ENCODE measurements at regions of chr6 and their contacts with region 1.

Region 1: DNA sequence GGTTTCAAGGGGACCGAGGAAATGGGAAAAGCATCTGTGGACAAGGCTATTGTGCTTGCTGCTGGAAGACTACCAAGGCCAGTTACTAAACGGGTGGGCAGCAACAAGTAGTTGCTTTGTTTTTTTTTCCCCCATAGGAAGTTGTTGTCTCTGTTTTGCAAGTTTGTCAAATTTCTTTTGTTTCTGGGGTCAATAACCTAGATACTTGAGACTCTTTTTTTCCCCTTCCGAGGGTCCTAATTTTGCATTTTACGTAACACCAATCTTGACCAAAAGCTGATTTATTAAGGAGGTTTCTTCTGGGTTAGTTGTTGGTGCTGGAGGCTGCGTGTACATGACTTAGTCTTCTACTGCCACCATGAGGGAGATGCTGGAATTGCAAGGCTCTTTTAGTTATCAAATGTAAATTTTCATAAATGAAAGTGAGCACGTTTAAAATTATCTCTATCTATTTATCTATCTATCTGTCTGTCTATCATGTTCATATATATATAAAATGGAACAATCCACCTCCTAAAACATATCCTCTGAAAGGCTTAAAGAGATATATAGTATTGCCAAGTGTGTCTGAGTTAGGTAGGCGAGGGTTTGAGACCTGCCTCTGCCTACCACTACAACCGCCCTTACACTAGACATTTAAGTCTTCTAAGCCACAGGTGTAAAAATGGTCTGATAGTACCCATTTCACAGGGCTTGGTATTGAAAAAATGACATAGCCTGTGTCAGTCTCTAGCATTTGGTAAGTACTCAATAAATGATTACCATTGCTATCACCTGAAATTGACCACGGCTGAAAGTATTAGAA is 60.2 kb downstream of the GCLC start:
- DNase-seq: no peak
- ATAC-seq: peak; percentile 66
- H3K4me3 Mint-ChIP-seq: peak overlapping the region; percentile 1
- H3K27ac Mint-ChIP-seq: peak overlapping the region; percentile 79
- H3K4me1 Mint-ChIP-seq: peaks cover 62% of the 10 kb centered on the region
- H3K27me3 Mint-ChIP-seq: peaks cover 3% of the 10 kb centered on the region
- CTCF ChIP-seq: peak; percentile 82

Region 2: DNA sequence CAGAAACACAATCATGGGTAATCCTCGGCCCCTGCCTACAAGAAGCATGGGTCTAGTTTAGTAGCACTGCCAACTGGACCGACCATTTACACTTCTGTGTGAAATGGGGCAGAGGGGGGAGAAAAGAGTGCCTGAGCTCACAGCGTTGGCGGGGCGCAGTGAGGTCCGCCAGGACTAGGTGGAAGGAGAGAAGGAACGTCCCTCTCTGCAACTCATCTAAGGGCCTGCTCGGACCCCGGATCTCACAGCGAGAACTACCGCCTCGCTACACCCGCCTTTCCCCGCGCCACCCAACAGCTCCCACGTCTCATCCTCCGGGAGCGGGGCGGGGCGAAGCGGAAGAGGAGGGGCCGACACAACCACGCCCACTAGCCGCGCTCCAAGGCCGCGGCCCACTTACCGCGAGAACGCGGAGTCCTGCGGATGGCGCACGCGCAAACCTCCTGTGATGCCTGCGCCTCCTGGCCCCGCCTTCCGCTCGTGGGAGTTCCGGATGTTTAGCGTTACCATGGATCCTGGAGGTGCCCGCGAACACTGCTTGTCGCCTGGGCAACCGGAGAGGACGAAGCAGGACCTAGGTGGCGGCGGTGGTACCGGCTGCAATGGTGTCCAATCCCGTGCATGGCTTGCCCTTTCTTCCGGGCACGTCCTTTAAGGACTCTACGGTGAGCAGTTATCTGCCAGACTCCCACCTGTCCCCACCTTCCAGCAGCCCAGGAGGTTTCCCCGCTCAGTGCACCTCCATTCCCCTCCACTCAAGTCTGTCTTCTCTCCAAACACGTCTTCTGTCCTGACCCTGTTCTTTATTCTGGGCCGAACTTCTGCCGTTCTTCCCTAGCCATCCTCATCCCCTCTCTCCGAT is 1064.6 kb before region 1 on chr6 and contains the start of gene EFHC1:
- CTCF ChIA-PET with region 1: no interaction called
- POLR2A ChIA-PET with region 1: no interaction called
- intact Hi-C with region 1: loop called (anchors 5 kb)
- DNase-seq: peak; percentile 97
- ATAC-seq: peak; percentile 90
- H3K4me3 Mint-ChIP-seq: no peak within 1 kb of the TSS
- H3K27ac Mint-ChIP-seq: no peak within 1 kb of the TSS
- H3K4me1 Mint-ChIP-seq: peaks cover 16% of the 10 kb centered on the region
- H3K27me3 Mint-ChIP-seq: no peaks in the 10 kb centered on the region
- CTCF ChIP-seq: no peak
- total RNA-seq, gene EFHC1: 15.8 and 23.2 TPM in 2 replicates

Region 3: DNA sequence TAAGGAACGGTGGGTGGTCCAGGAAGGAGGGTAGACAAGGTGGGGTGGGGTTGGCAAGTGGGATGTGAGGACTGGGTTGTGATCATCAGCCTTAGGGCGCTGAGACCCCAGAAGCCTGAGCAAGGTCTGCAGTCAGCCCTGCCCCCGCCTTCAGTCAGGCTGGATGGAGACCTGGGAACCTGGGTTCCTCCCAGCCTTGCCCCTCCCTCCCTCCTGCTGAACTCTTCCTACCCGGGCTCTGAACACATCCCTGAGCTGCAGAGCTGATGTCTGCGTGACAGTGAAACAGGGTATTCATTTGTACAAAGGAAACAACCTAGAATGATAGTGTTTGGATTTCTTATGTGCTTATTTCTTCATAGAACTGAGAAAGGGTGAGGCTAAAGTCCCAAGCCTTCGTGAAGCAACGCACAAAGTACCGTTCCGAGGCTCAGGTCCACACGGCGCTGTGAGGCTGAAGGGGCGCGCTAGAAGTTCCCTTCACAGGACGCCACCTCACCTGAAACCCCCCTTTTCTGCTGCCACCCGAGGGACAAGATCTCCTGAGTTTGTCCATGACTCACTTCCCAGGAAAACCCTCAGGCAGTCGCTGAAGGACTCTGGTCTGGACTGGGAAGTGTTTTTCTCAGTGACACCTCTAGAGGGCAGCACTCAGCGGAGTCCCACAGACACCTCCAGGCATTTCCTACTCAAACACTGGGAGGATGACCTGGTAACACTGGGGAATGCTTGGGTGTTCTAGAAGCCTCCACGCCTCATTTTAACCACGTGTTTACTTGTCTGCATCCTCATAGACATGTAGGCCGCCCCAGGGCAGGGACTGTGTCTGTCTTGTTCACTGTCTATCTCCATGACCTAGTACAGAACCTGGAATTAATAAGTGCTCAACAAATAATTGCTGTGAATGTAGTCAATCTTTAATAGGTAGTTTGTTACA is 645.3 kb before region 1 on chr6:
- CTCF ChIA-PET with region 1: no interaction called
- POLR2A ChIA-PET with region 1: no interaction called
- intact Hi-C with region 1: loop called (anchors 1 kb)
- DNase-seq: peak; percentile 26
- ATAC-seq: peak; percentile 77
- H3K4me3 Mint-ChIP-seq: no peak overlapping the region
- H3K27ac Mint-ChIP-seq: no peak overlapping the region
- H3K4me1 Mint-ChIP-seq: no peaks in the 10 kb centered on the region
- H3K27me3 Mint-ChIP-seq: peaks cover 29% of the 10 kb centered on the region
- CTCF ChIP-seq: peak; percentile 15

Region 4: DNA sequence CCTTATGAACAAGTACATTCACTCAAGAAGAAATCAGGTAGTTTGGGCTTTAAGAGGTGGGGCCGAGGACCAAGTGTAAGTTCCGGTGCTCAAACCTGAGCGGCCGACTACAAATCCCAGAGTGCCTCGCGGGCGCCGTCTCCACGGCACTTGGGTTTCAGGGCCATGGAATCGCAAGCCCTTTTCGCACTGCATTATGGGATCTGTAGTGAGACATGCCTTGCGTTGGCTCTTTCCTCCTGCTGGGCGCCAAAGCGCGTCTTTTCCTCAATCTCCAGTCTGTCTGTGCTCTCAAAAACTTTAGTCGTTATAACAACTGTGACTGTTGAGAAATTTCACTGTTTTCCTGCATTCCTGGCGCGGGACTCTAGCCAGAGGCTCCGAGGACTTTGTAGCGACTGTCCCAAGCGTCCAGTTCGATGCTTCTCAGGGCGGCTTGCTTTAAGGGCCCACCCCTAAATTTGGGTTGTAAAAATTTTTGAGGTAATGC is 419.9 kb before region 1 on chr6:
- CTCF ChIA-PET with region 1: interaction called, 3 read pairs
- POLR2A ChIA-PET with region 1: no interaction called
- intact Hi-C with region 1: loop called (anchors 2 kb)
- DNase-seq: peak; percentile 82
- ATAC-seq: peak; percentile 81
- H3K4me3 Mint-ChIP-seq: peak overlapping the region; percentile 100
- H3K27ac Mint-ChIP-seq: peak overlapping the region; percentile 99
- H3K4me1 Mint-ChIP-seq: peaks cover 57% of the 10 kb centered on the region
- H3K27me3 Mint-ChIP-seq: no peaks in the 10 kb centered on the region
- CTCF ChIP-seq: no peak

Region 5: GRCh38 chr6:53244958-53245357 is 239.7 kb before region 1 on chr6:
- CTCF ChIA-PET with region 1: no interaction called
- POLR2A ChIA-PET with region 1: no interaction called
- intact Hi-C with region 1: loop called (anchors 5 kb)
- DNase-seq: peak; percentile 42
- ATAC-seq: peak; percentile 83
- H3K4me3 Mint-ChIP-seq: peak overlapping the region; percentile 63
- H3K27ac Mint-ChIP-seq: peak overlapping the region; percentile 96
- H3K4me1 Mint-ChIP-seq: peaks cover 93% of the 10 kb centered on the region
- H3K27me3 Mint-ChIP-seq: no peaks in the 10 kb centered on the region
- CTCF ChIP-seq: no peak

Region 6: DNA sequence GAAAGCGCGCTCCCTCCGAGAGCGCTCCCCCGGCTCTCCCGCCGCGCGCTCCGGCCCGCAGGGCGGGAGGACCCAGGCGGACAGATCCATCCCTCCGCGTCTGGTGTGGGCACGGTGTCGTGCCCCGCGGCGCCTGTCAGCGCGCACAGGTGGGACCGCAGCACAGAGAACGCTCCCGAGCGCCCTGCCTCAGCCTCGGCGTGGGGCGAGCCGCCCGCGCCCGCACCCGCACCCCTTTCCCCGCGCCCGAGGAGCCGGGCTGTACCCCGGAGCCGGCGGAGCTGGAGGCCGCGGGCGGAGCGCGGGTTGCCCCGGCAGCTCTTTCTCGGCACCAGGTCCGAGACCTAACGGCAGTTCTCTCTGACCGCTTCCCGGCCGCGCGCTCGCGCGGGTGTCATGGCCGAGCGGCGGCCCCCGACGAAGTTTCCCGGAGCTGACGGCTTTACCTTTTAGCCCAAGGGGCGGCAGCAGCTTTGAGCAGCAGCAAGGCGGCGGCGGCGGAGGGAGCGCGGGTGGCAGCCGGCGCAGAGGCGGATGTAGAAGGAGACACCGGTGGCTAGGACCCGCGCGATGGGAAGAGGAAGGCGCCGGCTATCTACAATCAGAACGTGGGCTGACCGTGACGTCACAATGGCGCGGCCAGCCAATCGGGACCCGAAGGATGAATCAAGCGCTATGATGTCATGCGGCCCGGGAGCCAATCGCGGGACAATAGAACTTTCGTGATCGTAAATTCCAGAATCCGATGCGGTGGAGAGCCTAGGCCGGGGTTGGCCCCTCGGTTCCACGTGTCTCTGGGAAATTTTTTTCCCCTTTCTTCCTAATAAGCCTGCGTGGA is 136.1 kb before region 1 on chr6 and contains the start of gene ELOVL5:
- CTCF ChIA-PET with region 1: interaction called, 3 read pairs
- POLR2A ChIA-PET with region 1: no interaction called
- intact Hi-C with region 1: loop called (anchors 5 kb)
- DNase-seq: peak; percentile 92
- ATAC-seq: peak; percentile 78
- H3K4me3 Mint-ChIP-seq: peak within 1 kb of the TSS; percentile 94
- H3K27ac Mint-ChIP-seq: peak within 1 kb of the TSS; percentile 97
- H3K4me1 Mint-ChIP-seq: peaks cover 52% of the 10 kb centered on the region
- H3K27me3 Mint-ChIP-seq: no peaks in the 10 kb centered on the region
- CTCF ChIP-seq: no peak
- total RNA-seq, gene ELOVL5: 109 and 127 TPM in 2 replicates

Region 7: GRCh38 chr6:53437557-53438202 is 47.0 kb before region 1 on chr6:
- CTCF ChIA-PET with region 1: interaction called, 8 read pairs
- POLR2A ChIA-PET with region 1: interaction called, 3 read pairs
- intact Hi-C with region 1: loop called (anchors 1 kb)
- DNase-seq: no peak
- ATAC-seq: peak; percentile 77
- H3K4me3 Mint-ChIP-seq: no peak overlapping the region
- H3K27ac Mint-ChIP-seq: no peak overlapping the region
- H3K4me1 Mint-ChIP-seq: peaks cover 20% of the 10 kb centered on the region
- H3K27me3 Mint-ChIP-seq: no peaks in the 10 kb centered on the region
- CTCF ChIP-seq: no peak